ENCODE measurements at regions of chr6 and their contacts with region 1.

Region 1: DNA sequence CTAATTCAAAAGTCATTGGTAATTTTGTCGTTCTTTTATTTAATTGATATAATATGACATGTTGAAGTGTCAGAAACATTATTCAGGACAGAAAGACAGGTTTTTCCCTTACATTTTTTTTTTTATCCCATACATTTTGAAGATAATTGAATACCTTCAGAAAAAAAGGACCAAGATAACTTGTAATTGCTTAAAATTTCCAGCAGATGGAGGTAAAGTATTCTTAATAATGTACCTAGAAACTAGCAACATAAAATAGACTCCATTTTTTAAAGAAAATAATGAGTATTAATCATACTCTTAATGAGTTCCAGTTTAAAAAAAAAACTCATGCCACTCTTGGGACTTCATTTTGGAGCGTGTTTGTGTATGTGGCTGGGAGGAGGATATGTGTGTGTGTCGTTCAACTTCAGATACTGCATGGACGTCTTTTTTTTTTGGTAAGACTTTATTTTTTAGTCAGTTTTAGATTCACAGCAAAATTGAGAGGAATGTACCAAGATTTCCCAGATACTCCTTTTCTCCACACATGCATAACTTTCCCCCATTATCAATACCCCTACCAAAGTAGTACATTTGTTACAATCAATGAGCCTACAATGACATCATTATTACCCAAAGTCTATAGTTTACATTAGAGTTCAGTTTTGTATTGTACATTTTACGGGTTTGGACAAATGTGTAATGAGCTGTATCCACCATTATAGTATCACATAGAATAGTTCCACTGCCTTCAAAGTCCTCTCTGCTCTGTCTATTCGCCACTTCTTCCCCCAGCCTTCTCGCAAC is 79.4 kb downstream of the ROS1 start:
- DNase-seq: no peak
- ATAC-seq: peak; percentile 33 to 44
- H3K4me3 ChIP-seq: peak overlapping the region in 2 of 4 donors; percentile 11 to 18
- H3K27ac ChIP-seq: no peak overlapping the region
- H3K4me1 ChIP-seq: no peaks in the 10 kb centered on the region
- H3K27me3 ChIP-seq: no peaks in the 10 kb centered on the region
- CTCF ChIP-seq: peak in 4 of 5 experiments; percentile 23 to 55 (median 53)
- POLR2A ChIP-seq: no peak

Region 2: DNA sequence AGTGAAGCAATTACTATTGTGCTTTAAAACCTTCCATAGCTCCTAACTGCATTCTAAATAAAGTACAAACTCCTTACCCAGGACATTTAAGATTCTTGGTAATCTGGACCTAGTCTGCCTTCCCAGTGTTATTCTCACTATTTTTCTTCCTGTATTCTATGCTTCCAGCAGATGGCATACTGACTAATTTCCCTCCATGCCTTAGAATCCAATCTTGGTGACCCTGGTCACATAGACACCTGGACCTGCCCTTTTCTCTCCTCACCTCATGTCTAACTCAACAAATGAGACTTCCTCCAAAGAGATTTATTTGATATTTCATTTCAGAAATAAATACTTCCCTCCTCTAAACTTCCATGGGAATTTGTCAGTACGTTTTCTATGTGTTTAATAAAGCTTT is 53.6 kb after region 1 on chr6:
- in situ Hi-C with region 1: no loop called
- intact Hi-C with region 1: no loop called
- DNase-seq: no peak
- ATAC-seq: no peak
- H3K4me3 ChIP-seq: no peak overlapping the region
- H3K27ac ChIP-seq: no peak overlapping the region
- H3K4me1 ChIP-seq: peaks cover 3 to 11% of the 10 kb centered on the region in 2 donors
- H3K27me3 ChIP-seq: no peaks in the 10 kb centered on the region
- CTCF ChIP-seq: no peak
- POLR2A ChIP-seq: no peak

Region 3: DNA sequence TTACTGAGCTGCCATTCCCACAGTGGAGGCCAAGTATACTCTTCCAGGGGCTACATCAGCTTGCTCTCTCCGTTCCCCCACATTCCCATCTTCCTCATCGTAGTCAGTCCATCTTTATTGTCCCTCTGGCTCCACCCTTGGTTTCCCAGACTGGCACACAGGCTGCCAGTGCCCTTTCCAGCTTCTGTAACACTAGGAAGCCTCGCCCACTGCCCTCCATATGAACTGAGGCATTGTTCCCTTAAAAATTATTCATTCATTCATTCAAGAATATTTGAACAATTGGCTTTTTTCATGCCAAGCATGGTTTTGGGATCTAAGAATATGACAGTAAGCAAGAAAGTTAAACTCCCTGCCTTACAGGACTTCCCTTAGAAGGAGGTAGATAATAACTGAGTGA is 65.1 kb after region 1 on chr6:
- in situ Hi-C with region 1: no loop called
- intact Hi-C with region 1: no loop called
- DNase-seq: no peak
- ATAC-seq: no peak
- H3K4me3 ChIP-seq: no peak overlapping the region
- H3K27ac ChIP-seq: no peak overlapping the region
- H3K4me1 ChIP-seq: no peaks in the 10 kb centered on the region
- H3K27me3 ChIP-seq: no peaks in the 10 kb centered on the region
- CTCF ChIP-seq: no peak
- POLR2A ChIP-seq: no peak

Region 4: GRCh38 chr6:117449549-117450439 is 103.5 kb after region 1 on chr6:
- in situ Hi-C with region 1: loop called in 1 of 4 experiments (anchors 10 kb)
- intact Hi-C with region 1: loop called (anchors 2 kb)
- DNase-seq: peak; percentile 6 to 12
- ATAC-seq: no peak
- H3K4me3 ChIP-seq: no peak overlapping the region
- H3K27ac ChIP-seq: no peak overlapping the region
- H3K4me1 ChIP-seq: peaks cover 0 to 6% of the 10 kb centered on the region in 2 donors
- H3K27me3 ChIP-seq: no peaks in the 10 kb centered on the region
- CTCF ChIP-seq: peak; percentile 52 to 78 (median 66)
- POLR2A ChIP-seq: no peak

Region 5: DNA sequence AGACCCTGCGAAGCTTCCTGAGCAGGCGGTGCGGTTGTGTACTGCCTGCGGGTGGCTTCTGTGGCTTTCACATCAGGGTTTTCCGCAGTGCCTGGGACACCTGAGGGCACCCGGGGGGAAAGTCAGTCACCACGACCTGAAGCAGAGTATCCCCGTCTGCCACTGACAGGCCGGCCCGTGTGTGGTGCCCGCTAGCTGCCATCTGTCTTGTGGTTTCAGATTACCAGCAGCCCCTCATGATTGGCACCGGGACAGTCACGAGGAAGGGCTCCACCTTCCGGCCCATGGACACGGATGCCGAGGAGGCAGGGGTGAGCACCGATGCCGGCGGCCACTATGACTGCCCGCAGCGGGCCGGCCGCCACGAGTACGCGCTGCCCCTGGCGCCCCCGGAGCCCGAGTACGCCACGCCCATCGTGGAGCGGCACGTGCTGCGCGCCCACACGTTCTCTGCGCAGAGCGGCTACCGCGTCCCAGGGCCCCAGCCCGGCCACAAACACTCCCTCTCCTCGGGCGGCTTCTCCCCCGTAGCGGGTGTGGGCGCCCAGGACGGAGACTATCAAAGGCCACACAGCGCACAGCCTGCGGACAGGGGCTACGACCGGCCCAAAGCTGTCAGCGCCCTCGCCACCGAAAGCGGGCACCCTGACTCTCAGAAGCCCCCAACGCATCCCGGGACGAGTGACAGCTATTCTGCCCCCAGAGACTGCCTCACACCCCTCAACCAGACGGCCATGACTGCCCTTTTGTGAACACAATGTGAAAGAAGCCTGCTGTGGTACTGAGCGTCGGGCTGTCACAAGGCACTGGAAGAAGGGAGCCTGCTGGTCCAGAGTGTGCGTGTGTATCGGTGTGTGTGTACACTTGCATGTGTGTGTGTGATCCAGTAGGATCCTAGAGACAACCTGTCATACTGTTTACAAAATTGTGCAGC is 201.6 kb after region 1 on chr6:
- in situ Hi-C with region 1: loop called in 1 of 4 experiments (anchors 5 kb)
- intact Hi-C with region 1: no loop called
- DNase-seq: peak; percentile 77 to 88
- ATAC-seq: peak; percentile 76 to 87
- H3K4me3 ChIP-seq: peak overlapping the region; percentile 54 to 71 (median 64)
- H3K27ac ChIP-seq: peak overlapping the region; percentile 78 to 88 (median 84)
- H3K4me1 ChIP-seq: peaks cover 20 to 23% of the 10 kb centered on the region in 2 donors
- H3K27me3 ChIP-seq: no peaks in the 10 kb centered on the region
- CTCF ChIP-seq: peak in 1 of 5 experiments; percentile 10
- POLR2A ChIP-seq: peak; percentile 43 to 63

Region 6: GRCh38 chr6:117555882-117556498 is 209.7 kb after region 1 on chr6:
- in situ Hi-C with region 1: loop called in 3 of 4 experiments (anchors 5 kb)
- intact Hi-C with region 1: loop called (anchors 1 kb)
- DNase-seq: no peak
- ATAC-seq: peak; percentile 43 to 55
- H3K4me3 ChIP-seq: no peak overlapping the region
- H3K27ac ChIP-seq: no peak overlapping the region
- H3K4me1 ChIP-seq: peaks cover 4 to 6% of the 10 kb centered on the region in 2 donors
- H3K27me3 ChIP-seq: no peaks in the 10 kb centered on the region
- CTCF ChIP-seq: peak; percentile 73 to 91 (median 86)
- POLR2A ChIP-seq: no peak

Region 7: GRCh38 chr6:117591405-117591804 is 245.1 kb after region 1 on chr6:
- in situ Hi-C with region 1: loop called in 1 of 4 experiments (anchors 25 kb)
- intact Hi-C with region 1: no loop called
- DNase-seq: no peak
- ATAC-seq: no peak
- H3K4me3 ChIP-seq: no peak overlapping the region
- H3K27ac ChIP-seq: no peak overlapping the region
- H3K4me1 ChIP-seq: peaks cover 0 to 4% of the 10 kb centered on the region in 2 donors
- H3K27me3 ChIP-seq: no peaks in the 10 kb centered on the region
- CTCF ChIP-seq: no peak
- POLR2A ChIP-seq: no peak

Measured in gastrocnemius medialis (tissue), 4 donors.